ENCODE measurements at regions of chr5 and their contacts with region 1.

Region 1: DNA sequence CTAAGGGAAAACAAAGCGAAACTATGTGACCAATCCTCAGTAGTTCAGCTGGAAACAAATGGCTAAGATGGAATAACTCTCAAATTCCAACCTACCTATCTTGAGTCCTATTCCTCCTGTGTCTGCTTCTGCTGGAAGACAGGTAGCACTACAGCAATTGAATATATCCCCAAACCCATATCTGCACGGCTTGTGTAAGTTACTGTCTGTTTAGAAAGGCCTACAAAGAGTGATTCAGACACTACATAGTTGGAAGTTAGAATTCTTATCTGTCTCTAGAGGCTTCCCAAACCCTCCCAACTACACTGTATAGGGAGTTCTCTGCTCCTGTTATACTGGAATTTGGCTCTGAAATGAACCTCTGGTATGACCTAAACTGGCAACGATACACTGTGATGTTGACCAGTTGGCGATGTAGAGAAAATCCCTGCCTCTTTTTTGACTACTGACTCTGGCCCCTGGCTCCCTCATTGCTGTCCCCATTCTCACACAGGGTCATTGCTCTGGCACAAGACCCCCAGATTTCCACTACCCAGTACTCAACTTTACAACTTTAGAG is 22.6 kb upstream of the NADK2 start:
- DNase-seq: no peak
- H3K4me3 ChIP-seq: no peak overlapping the region
- H3K27ac ChIP-seq: no peak overlapping the region
- H3K4me1 ChIP-seq: no peaks in the 10 kb centered on the region
- H3K27me3 ChIP-seq: peaks cover 0 to 5% (median 0%) of the 10 kb centered on the region in 7 donors
- CTCF ChIP-seq: no peak
- POLR2A ChIP-seq: no peak

Region 2: DNA sequence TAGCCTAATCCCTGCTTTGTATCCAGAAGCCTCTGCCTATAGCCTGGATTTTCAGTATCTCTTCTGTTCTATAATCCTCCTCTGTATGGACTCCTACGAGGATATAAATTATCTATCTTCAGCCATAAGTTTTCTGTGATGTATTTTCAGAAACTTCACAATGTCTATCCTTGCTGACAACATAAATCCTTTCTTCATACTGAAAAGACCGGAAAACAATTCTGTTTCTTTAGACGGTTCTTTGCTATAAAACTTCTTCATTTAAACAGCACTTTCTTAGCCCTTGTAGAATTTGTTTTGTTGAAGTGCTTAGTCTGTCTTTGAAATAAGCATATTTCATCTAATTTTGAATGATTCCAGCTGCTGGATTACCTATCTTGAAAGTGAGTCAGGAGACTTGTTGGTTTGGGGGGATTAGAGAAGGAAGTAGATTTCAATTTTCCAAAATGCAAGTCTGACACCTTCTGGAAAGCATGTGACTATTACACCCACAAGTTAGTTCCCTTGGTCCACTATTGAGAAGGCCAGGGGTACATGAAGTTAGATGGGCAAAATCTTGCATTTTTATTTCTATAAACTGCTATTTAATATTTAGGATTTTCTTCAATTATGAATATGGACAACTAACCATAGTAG is 133.7 kb after region 1 on chr5:
- intact Hi-C with region 1: loop called (anchors 10 kb)
- DNase-seq: no peak
- H3K4me3 ChIP-seq: no peak overlapping the region
- H3K27ac ChIP-seq: no peak overlapping the region
- H3K4me1 ChIP-seq: peaks cover 0 to 5% (median 0%) of the 10 kb centered on the region in 6 donors
- H3K27me3 ChIP-seq: peaks cover 0 to 15% (median 0%) of the 10 kb centered on the region in 7 donors
- CTCF ChIP-seq: peak in 5 of 11 experiments; percentile 8 to 40 (median 24)
- POLR2A ChIP-seq: no peak

Region 3: DNA sequence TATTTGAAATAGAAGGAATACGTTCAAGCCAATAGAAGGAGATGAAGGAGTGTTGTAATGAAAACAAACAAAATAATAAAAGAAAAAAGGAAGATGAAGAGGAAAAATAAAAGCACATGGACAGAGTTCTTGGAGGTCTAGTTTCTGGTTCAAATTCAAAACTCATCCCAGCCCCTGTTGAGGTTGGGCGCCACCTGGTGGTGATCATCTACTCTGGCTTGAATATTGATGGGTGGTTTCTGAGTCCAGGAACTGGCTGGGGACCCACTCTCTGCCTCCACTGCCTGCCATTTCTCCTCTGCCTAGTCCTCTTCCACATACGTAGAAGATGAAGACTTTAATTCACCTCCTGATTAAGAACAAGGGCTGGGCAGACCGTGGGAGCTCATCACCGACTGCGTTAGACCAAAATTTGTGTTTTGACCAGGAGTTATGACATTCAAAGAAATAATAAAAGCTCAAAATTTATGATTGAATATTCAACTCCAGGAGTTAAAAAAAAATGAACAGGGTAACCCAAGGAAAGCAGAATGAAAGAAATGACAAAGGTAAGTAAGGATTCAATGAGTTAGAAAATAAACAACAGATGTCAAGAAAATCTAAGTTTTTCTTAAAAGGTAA is 243.2 kb after region 1 on chr5:
- intact Hi-C with region 1: loop called (anchors 10 kb)
- DNase-seq: peak; percentile 90
- H3K4me3 ChIP-seq: no peak overlapping the region
- H3K27ac ChIP-seq: no peak overlapping the region
- H3K4me1 ChIP-seq: peaks cover 0 to 5% (median 0%) of the 10 kb centered on the region in 6 donors
- H3K27me3 ChIP-seq: peaks cover 0 to 10% (median 0%) of the 10 kb centered on the region in 7 donors
- CTCF ChIP-seq: peak; percentile 32 to 80 (median 69)
- POLR2A ChIP-seq: no peak

Measured in spleen (tissue), 13 donors.